ENCODE measurements at regions of chr14 and their contacts with region 1.

Region 1: GRCh38 chr14:20632682-20633428 is 8.6 kb downstream of the OR6S1 start:
- DNase-seq: no peak
- ATAC-seq: peak; percentile 7 to 85 (median 60)
- H3K4me3 ChIP-seq: peak overlapping the region in 8 of 10 donors; percentile 2 to 45 (median 30)
- H3K27ac ChIP-seq: no peak overlapping the region
- H3K4me1 ChIP-seq: peaks cover 0 to 37% (median 23%) of the 10 kb centered on the region in 9 donors
- H3K27me3 ChIP-seq: peaks cover 0 to 100% (median 58%) of the 10 kb centered on the region in 7 donors
- CTCF ChIP-seq: no peak

Region 2: DNA sequence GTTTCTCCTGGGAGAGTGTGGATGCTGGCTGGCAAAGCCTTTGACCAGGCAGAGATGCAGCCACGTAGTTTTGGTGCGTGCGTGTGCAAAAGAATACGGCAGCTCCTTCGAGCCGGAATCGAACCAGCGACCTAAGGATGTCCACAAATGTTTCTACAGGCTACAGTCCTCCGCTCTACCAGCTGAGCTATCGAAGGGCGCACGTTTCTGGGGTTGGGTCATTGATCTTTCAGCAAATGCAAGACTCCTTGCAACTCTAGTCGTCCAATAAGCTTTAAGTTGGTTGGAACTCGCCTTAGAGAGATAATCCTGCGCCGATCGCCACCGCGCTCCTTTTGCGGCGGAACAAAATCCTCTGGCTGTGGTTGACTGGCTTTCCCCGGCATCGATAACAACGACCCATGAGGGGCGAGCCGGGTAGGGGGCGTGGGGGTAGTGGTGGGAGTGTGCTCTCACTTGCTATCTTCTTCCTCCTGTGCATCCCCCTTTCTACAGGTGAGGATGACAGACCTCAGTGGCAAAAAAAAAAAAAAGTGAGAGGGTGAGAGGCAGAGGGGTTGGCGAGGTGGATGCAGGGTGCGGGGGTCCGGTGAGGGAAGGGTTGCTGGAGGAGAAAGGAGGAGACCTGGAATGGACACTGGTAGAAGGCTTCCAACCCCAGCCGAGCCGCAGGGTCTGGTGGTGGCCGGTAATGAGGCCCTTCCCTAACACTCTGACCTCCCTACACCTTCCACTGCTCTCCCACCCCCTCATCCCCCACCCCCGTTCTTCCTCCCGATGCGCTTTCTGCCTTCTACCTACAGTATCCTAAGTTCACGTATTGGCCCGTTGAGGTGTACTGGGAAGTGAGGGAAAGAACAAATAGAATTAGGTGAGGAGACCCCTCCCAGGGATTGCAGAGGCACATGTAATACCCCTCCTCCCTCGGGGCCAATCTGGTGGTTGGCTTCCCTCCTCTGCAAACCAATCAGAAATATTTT is 20.4 kb after region 1 on chr14:
- intact Hi-C with region 1: loop called in 1 of 10 experiments (anchors 1 kb)
- DNase-seq: no peak
- ATAC-seq: peak in 1 of 8 donors; percentile 15
- H3K4me3 ChIP-seq: no peak overlapping the region
- H3K27ac ChIP-seq: no peak overlapping the region
- H3K4me1 ChIP-seq: peaks cover 0 to 6% (median 0%) of the 10 kb centered on the region in 9 donors
- H3K27me3 ChIP-seq: peaks cover 14 to 99% (median 91%) of the 10 kb centered on the region in 7 donors
- CTCF ChIP-seq: no peak

Measured in heart right ventricle (tissue), 16 donors.